ENCODE measurements at regions of chr2 and their contacts with region 1.

Region 1: DNA sequence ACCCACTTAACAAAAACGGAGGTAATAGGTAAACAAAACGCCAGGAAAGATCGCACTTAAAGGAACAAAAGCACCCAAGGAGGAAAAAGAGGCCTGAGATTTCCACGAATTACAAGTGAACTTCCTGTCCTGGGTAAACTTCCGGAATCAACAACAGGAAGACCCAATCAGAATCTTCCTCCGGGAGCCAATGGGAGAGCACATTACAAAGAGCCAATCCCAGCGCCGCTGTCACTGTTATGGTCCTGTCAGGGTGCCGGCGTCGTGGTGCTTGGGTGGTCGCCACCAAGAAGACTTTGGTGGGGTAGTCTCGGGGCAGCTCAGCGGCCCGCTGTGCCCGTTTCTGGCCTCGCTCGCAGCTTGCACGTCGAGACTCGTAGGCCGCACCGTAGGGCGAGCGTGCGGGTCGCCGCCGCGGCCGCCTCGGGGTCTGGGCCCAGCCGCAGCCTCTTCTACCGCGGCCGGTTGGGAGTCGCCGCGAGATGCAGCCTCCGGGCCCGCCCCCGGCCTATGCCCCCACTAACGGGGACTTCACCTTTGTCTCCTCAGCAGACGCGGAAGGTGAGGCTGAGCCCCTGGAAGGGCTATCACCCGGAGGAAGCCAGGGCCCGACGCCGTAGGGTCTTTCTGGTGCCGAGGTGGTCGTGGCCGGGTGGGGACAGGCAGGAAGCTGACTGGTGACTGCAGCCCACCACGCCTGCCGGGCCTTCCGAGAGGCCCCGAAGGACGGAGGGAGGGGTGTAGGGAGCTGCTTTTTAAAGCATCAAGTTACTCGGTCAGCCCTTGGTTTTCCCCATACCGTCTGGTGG is at the start of gene YIPF4:
- DNase-seq: peak; percentile 83
- ATAC-seq: peak; percentile 100
- H3K4me3 ChIP-seq: peak within 1 kb of the TSS; percentile 89 to 97
- H3K27ac ChIP-seq: peak within 1 kb of the TSS; percentile 93
- H3K4me1 ChIP-seq: peaks cover 4% of the 10 kb centered on the region; the same call in 1 of the 2 replicates
- H3K27me3 ChIP-seq: no peaks in the 10 kb centered on the region
- CTCF ChIP-seq: no peak
- total RNA-seq, gene YIPF4: 45.9 TPM

Region 2: DNA sequence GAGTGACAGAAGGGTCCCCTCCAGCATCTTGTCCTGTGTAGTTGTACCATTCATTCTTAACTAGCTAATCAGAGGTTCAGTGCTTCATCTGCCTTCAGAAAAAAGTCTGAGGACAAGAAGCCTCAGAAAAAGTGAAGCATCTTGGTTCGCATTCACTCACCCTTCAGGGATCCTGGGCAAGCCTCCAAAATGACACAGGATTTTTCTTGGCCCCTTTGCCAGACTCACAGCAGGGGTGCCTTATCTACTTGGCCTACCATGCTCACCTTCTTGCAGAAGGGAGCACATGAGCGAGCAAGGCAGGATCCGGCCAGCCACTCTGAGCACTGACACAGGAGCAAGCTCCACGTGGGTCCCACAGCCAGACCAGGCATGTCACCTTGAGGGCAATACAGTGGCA is 820.2 kb before region 1 on chr2:
- CTCF ChIA-PET with region 1: no interaction called
- POLR2A ChIA-PET with region 1: no interaction called
- in situ Hi-C with region 1: no loop called
- intact Hi-C with region 1: loop called (anchors 10 kb)
- DNase-seq: no peak
- ATAC-seq: no peak
- H3K4me3 ChIP-seq: no peak overlapping the region
- H3K27ac ChIP-seq: no peak overlapping the region
- H3K4me1 ChIP-seq: no peaks in the 10 kb centered on the region
- H3K27me3 ChIP-seq: no peaks in the 10 kb centered on the region
- CTCF ChIP-seq: no peak

Region 3: GRCh38 chr2:31563273-31563839 is 714.5 kb before region 1 on chr2:
- CTCF ChIA-PET with region 1: no interaction called
- POLR2A ChIA-PET with region 1: no interaction called
- in situ Hi-C with region 1: no loop called
- intact Hi-C with region 1: no loop called
- DNase-seq: no peak
- ATAC-seq: no peak
- H3K4me3 ChIP-seq: no peak overlapping the region
- H3K27ac ChIP-seq: no peak overlapping the region
- H3K4me1 ChIP-seq: no peaks in the 10 kb centered on the region
- H3K27me3 ChIP-seq: no peaks in the 10 kb centered on the region
- CTCF ChIP-seq: no peak

Region 4: DNA sequence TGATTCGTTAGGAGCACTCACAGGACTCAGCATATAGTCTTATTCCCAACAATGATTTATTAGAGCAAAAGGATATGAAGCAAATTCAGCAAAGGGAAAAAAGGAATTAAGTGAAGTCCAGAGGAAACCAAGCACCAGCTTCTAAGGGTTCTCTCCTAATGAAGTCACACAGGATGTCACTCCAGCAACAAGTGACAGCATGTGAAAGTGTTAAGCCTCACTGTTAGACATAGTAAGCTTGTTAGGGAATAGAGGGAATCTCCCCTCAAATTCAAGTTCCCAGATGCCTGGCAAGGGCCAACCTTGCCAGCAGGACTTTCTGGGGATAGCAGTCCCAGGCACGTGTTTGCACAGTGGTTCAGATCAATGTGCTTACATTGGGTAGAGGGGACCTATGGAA is 116.6 kb before region 1 on chr2:
- CTCF ChIA-PET with region 1: no interaction called
- POLR2A ChIA-PET with region 1: no interaction called
- in situ Hi-C with region 1: no loop called
- intact Hi-C with region 1: no loop called
- DNase-seq: no peak
- ATAC-seq: no peak
- H3K4me3 ChIP-seq: no peak overlapping the region
- H3K27ac ChIP-seq: no peak overlapping the region
- H3K4me1 ChIP-seq: peaks cover 5% of the 10 kb centered on the region
- H3K27me3 ChIP-seq: no peaks in the 10 kb centered on the region
- CTCF ChIP-seq: no peak

Region 5: DNA sequence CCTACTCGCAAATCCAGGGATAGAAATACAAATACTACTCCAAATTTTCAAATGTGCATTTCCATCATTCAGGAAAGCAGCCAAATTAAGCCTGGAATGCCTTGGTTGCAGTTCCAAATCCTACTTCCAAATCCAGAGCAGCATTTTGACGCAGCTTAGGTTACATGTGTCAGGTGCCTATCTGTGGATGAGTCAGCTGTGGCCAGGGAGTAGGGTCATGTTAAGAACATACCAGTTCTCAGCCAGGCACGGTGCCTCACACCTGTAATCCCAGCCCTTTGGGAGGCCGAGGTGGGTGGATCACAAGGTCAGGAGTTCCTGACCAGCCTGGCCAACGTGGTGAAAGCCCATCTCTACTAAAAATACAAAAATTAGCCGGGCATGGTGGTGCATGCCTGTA is 95.2 kb before region 1 on chr2:
- CTCF ChIA-PET with region 1: no interaction called
- POLR2A ChIA-PET with region 1: interaction called, 15 read pairs
- in situ Hi-C with region 1: no loop called
- intact Hi-C with region 1: no loop called
- DNase-seq: no peak
- ATAC-seq: no peak
- H3K4me3 ChIP-seq: no peak overlapping the region
- H3K27ac ChIP-seq: no peak overlapping the region
- H3K4me1 ChIP-seq: no peaks in the 10 kb centered on the region
- H3K27me3 ChIP-seq: no peaks in the 10 kb centered on the region
- CTCF ChIP-seq: no peak

Region 6: DNA sequence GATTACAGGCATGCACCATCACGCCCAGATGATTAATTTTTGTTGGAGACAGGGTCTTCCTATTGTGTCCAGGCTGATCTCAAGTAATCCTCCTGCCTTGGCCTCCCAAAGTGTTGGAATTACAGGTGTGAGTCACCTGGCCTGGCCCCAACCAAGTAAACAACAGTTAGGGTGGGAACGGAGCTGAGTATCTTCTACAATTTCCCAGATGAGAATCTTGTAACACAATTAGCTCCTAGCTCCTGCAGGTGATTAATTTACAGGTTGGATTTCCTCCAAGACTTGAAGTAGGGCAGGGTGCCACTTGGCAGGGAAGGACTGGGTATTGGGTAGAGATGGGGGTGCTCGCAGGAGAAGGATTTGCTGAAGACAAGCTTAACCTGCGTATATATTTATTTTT is 31.0 kb before region 1 on chr2:
- CTCF ChIA-PET with region 1: no interaction called
- POLR2A ChIA-PET with region 1: no interaction called
- in situ Hi-C with region 1: no loop called
- intact Hi-C with region 1: no loop called
- DNase-seq: no peak
- ATAC-seq: no peak
- H3K4me3 ChIP-seq: no peak overlapping the region
- H3K27ac ChIP-seq: no peak overlapping the region
- H3K4me1 ChIP-seq: no peaks in the 10 kb centered on the region
- H3K27me3 ChIP-seq: no peaks in the 10 kb centered on the region
- CTCF ChIP-seq: no peak

Region 7: DNA sequence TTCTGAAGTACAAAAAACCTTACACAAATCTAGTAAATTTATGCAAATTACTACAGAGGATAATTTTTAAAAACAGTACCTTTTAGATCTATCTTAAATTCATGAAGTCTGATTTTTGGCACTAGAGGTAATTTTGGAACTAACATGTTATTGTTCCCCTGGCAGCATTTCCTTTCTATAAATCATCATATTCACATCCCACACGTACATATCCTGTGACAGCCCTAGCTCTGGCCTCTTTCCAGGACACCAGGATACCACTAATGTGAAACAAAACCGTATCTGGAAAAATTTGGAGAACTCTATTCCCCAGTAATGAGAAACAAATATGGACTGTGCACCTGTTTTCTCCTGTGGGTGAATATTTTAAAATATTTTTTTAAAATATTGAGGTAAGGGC is 64.9 kb after region 1 on chr2:
- CTCF ChIA-PET with region 1: no interaction called
- POLR2A ChIA-PET with region 1: no interaction called
- in situ Hi-C with region 1: no loop called
- intact Hi-C with region 1: loop called (anchors 2 kb)
- DNase-seq: no peak
- ATAC-seq: no peak
- H3K4me3 ChIP-seq: no peak overlapping the region
- H3K27ac ChIP-seq: no peak overlapping the region
- H3K4me1 ChIP-seq: no peaks in the 10 kb centered on the region
- H3K27me3 ChIP-seq: no peaks in the 10 kb centered on the region
- CTCF ChIP-seq: no peak